ENCODE measurements at regions of chr10 and their contacts with region 1.

Region 1: DNA sequence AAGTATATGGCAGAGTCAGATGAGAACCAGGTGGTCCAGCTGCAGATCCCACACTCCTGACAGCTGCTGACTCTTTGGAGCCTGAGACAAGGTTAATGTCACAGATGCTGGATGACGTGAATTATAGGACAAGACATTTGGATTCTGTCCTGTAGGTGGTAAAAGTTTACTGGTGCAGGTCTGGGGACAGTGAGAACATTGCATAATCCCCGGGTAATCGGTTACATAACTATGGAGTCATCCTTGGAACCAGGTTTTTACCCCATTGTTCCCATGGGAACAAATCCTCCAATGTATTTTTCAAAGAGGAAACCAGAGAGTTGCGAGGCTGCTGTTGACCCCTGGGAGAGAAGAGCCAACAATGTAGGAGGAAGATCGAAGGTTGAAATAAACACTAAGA is 27.5 kb upstream of the ZCCHC24 start:
- DNase-seq: no peak
- H3K4me3 ChIP-seq: no peak overlapping the region
- CTCF ChIP-seq: no peak

Region 2: DNA sequence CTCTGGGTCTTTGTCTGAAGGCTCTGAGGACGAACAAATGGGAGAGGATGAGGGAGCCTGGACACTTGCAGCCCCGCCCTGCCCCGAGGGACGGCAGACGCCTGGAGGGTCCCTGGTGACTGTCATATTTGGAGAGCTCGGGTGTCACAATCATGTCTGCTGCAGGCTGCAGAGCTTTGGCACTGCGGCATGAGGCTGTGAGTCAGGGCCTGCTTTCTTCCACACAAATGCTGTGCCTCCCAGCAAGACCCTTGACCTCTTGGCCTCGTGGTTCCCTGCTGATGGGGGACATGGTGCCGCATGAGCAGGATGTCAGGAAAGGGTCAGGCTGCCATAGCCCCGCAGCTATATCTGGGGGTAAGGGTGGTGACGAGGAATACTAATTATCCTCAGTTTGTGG is 190.6 kb before region 1 on chr10:
- CTCF ChIA-PET with region 1: no interaction called
- POLR2A ChIA-PET with region 1: no interaction called
- DNase-seq: no peak
- H3K4me3 ChIP-seq: no peak overlapping the region
- CTCF ChIP-seq: no peak

Region 3: DNA sequence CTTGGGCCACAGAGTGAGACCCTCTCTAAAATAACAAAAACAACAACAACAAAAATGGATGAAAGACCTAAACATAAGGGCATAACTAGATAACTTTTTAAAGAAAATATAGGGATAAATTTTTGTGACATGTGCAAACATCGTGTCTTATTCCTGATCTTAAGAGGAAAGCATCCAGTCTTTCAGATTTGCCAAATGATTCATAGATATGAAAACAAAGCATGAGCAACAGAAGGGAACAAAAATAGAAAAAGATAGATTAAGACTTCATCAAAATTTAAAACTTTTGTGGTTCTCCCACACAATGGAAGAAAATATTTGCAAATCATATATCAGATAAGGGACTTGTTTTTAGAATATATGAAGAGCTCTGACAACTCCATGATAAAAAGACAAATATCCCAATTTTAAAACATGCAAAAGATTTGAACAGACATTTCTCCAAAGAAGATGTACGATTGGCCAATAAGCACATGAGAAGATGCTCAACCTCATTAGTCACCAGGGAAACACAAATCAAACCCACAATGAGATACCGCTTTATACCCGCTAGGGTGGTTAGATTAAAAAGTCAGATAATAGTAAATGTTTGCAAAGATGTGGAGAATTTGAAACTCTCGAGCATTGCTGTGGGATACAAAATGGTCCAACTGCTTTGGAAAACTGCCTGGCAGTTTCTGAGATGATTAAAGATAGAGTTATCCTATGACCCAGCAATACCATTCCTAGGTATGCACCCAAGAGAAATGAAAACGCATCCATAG is 105.3 kb before region 1 on chr10:
- CTCF ChIA-PET with region 1: interaction called, 106 read pairs
- POLR2A ChIA-PET with region 1: no interaction called
- DNase-seq: no peak
- H3K4me3 ChIP-seq: no peak overlapping the region
- CTCF ChIP-seq: no peak

Region 4: DNA sequence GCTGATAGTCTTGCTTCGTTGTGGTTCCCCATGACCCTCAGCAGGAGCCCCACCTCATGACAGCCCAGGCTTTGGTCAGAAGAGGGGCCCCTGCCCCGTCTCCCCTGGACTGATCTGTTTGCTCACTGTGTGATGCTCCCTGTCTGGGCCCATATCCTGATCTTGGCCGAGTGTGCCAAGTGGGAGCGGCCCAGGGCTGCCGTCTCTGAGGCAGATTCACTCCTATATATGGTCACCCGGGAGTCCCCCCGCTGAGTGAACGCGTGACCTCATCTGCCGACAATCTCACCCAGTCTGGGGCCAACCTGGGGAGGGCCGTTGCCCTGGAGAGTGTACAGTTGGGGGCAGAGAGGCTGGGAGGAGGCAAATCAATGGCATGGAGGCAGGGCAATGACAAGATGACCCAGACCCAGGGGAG is 91.1 kb before region 1 on chr10:
- CTCF ChIA-PET with region 1: interaction called, 10 read pairs
- POLR2A ChIA-PET with region 1: no interaction called
- DNase-seq: peak; percentile 62
- H3K4me3 ChIP-seq: no peak overlapping the region
- CTCF ChIP-seq: no peak

Region 5: GRCh38 chr10:79400146-79401004 is 72.6 kb before region 1 on chr10:
- CTCF ChIA-PET with region 1: interaction called, 11 read pairs
- POLR2A ChIA-PET with region 1: no interaction called
- DNase-seq: no peak
- H3K4me3 ChIP-seq: no peak overlapping the region
- CTCF ChIP-seq: peak; percentile 70

Region 6: GRCh38 chr10:79454259-79454658 is 18.7 kb before region 1 on chr10:
- CTCF ChIA-PET with region 1: interaction called, 75 read pairs
- POLR2A ChIA-PET with region 1: no interaction called
- DNase-seq: no peak
- H3K4me3 ChIP-seq: no peak overlapping the region
- CTCF ChIP-seq: no peak

Measured in AG04449 (cell line).